ENCODE measurements at regions of chr3 and their contacts with region 1.

Region 1: DNA sequence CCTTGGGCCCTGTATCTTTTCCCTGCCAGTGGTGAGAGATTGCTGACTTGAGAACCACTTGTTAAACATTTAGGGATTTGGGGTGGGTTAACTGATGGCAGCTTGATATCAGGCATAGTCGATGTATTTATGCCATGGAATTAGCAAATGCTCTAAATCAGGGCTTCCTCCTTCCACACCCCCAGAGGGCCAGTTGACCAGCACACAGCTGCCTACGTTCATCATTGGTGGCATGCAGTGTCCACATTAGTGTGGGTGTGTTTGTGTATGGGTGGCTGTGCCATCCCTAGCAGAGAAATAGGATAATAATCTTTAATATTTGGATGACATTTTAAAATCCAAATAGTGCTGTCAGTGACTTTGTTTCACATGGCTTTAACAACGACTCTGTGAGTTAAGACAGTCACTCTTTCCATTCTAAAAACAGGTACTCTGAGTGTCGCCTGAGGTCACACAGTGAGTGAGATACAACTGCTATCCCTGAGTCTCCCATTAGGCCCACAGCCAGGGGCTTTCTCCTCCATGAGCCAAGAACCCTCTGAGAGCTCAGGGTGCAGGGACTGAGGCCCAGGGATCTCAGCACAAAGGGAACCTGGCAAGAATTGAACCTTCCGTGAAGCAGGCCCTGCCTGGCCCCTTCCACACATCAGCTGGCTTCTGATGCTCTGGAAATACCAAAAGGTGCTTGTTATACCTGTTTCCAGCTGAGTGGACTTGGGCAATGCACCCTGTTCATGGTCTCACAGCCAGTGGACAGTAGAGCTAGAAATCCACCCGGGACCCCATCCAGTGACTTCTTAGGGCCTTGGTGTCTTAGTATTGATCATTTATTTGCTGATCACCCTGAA is 4.3 kb upstream of the LTF start:
- DNase-seq: no peak
- ATAC-seq: no peak
- H3K4me3 ChIP-seq: no peak overlapping the region
- H3K27ac ChIP-seq: no peak overlapping the region
- H3K4me1 ChIP-seq: no peaks in the 10 kb centered on the region
- H3K27me3 ChIP-seq: no peaks in the 10 kb centered on the region
- CTCF ChIP-seq: no peak

Region 2: GRCh38 chr3:46098319-46098761 is 370.6 kb before region 1 on chr3:
- CTCF ChIA-PET with region 1: no interaction called
- POLR2A ChIA-PET with region 1: no interaction called
- intact Hi-C with region 1: no loop called
- DNase-seq: peak; percentile 33
- ATAC-seq: no peak; the same call in 1 of the 2 replicates
- H3K4me3 ChIP-seq: no peak overlapping the region
- H3K27ac ChIP-seq: no peak overlapping the region
- H3K4me1 ChIP-seq: 0 out of 2 replicates have a peak, but pooled peaks cover 9% of the 10 kb centered on the region
- H3K27me3 ChIP-seq: no peaks in the 10 kb centered on the region
- CTCF ChIP-seq: no peak

Region 3: DNA sequence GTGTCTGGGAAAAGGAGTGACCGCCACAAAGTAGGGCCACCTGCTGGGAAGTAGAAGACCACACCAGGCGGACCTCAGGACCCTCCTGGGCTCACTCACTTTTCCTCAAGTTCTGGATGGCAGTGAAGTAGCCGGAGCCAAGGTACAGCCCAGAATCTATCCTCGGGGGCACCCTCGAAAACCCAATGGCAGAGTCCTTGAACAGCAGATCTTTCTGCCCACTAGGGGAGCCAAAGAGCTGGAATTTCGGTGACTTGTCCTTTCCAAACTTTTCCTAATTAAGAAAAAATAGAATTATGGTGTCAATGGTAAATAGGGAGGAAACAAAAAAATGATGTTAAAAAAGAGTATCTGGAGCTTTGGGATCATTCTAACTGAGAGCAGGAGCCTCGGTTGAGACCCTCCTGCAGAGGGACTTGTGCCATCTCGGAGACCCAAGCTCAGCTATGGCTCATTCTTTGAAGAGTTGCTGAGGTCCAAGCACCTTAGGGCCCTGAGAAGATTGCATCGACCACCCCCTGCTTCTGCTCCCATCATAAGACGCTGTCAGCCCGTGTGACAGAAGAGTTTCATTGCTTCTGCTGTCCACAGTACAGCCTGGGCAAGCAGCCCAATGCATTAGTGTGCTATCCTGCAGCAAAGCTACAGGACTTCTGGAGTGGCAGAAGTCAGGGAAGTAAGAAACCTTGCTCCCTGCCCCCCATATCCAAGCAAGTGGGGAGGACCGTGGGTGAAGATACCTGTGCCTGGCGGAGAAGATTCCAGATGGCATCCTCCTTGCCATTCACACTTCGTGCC is 19.0 kb before region 1 on chr3:
- CTCF ChIA-PET with region 1: no interaction called
- POLR2A ChIA-PET with region 1: no interaction called
- intact Hi-C with region 1: no loop called
- DNase-seq: peak; percentile 43
- ATAC-seq: no peak
- H3K4me3 ChIP-seq: no peak overlapping the region
- H3K27ac ChIP-seq: no peak overlapping the region
- H3K4me1 ChIP-seq: no peaks in the 10 kb centered on the region
- H3K27me3 ChIP-seq: no peaks in the 10 kb centered on the region
- CTCF ChIP-seq: peak; percentile 82

Region 4: GRCh38 chr3:46551615-46552014 is 82.6 kb after region 1 on chr3:
- CTCF ChIA-PET with region 1: no interaction called
- POLR2A ChIA-PET with region 1: interaction called, 18 read pairs
- intact Hi-C with region 1: no loop called
- DNase-seq: peak; percentile 59
- ATAC-seq: peak; percentile 70
- H3K4me3 ChIP-seq: no peak overlapping the region
- H3K27ac ChIP-seq: no peak overlapping the region; the same call in 1 of the 2 replicates
- H3K4me1 ChIP-seq: peaks cover 35% of the 10 kb centered on the region
- H3K27me3 ChIP-seq: no peaks in the 10 kb centered on the region
- CTCF ChIP-seq: no peak